ENCODE measurements at regions of chr19 and their contacts with region 1.

Region 1: DNA sequence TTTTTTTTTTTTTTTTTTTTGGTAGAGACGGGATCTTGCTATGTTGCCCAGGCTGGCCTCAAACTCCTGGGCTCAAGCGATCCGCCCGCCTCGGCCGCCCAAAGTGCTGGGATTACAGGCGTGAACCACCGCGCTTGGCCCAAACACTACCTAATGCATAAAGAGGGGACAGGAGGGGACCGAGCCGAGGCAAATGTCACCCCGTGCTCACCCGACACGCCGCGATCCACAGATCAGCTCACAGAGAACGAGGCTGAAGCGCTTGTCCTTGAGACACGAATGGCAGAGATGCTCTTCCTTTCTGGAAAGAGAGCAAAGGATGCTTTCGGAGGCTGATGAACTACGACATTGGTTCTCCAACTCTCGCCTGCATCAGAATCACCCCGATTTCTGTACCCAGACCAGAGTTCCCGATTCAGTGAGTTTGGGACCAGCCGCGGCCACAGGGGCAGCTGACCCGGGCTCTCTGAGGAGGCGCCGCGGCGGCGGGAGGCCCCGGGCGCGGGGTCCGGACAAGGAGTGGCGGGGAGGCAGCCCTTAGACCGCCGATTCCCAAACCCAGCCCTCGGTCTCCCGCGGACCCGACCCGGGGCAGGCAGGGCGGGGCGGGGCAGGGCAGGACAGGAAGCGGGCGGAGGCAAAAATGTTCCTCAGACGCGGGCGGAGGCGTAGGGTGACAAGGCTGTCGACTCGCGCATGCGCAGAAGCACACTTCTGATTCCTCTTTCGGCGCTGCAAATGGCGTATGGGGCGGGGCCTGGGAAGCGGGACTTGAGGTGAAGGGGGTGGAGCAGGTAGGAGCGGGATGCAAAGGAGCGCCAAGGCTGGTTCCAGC is at the start of gene ZNF699:
- DNase-seq: peak; percentile 95 to 99 (median 98)

Region 2: DNA sequence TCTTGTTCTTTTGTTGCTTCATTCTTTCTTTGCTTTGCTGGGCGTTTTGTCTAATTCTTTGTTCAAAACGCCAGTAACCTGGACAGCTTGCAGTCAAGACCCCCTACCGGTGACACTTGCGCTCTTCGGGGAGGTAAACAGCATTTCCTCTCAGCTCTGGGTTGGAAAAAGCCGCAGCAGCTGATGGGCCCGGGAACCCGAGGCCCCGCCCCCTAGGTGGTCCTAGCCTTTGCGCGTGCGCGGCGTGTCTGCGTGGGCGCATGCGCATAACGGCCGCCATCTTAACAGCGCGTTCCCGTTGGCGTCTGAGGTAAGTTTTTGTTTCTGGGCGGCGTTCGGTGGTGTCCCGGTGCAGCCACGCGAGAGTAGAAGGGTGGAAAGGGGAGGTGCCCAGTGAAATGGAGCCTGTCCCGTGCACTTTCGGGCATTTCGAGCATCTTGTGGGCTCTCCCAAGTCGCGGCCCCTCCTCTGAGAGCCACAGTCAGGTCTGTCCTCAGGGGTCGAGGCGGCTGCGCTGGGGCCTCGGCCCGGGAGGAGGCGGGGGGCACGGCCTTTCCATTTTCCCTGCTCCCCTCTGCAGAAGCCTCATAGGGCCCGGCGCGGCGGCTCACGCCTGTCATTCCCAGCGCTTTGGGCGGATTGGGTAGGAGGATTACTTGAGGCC is 14.7 kb after region 1 on chr19 and contains the start of gene ZNF559:
- intact Hi-C with region 1: loop called (anchors 1 kb)
- DNase-seq: peak; percentile 76 to 95 (median 90)

Region 3: DNA sequence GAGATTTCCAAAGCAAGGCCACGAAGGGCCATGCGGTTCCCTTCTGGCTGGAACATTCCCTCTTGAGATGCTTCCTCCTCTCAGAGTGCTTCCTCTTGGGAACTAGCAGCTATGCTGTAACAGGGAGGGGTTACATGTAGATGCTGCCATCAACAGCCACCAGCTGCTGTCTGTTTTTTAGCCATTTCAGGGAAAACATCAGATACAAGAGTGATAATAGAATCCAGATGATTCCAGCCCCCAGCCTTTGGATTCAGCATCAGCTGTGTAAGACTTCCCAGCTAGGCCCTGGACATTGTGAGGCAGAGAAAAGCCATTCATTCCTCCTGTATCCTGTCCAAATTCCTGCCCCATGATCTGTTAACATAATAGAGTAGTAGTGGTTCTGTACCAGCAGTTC is 45.3 kb after region 1 on chr19:
- intact Hi-C with region 1: no loop called
- DNase-seq: no peak

Region 4: DNA sequence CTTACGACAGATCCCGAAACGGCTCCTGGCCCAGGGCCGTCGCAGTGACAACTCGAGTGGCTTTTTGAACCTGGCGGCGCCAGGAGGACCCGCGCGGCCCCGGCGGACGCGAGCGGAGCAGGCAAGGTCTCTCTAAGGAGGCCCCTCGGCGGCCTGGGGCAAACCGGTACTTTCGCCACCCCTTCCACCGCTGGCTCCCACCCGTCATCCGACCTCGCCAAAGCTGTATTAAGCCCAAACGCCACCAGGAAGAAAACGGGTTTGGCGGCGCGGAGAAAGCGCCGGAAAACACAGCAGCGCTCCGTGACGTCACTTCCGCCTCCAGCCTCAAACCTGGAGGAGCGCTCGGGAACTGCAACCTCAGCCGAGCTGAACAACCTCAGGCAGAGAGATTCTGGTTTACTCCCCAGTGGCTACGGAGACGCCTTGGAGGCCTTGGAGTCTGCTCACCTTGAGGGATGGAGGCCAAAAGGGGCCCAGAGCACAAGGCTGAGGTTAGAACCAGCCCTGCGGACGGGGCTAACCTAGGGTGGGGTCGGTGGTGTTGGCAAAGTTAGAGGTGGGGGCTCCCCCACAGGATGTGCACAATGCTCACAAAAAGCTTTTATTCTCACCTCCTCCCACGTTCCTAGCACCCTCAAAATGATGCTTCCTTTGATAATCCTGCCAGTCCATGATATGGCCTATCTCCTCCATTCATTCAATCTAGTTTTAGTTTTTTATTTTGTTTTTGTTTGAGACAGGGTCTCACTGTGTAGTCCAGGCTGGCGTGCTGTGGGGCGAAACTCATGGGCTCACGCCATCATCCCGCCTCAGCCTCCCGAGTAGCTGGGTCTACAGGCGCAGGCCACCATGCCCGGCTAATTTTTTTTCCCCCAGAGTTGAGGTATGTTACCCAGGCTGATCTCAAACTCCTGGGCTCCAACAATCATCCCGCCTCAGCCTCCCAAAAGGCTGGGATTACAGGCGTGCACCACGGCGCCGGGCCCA is 126.2 kb after region 1 on chr19 and contains the start of gene ZNF266:
- intact Hi-C with region 1: loop called (anchors 10 kb)
- DNase-seq: peak; percentile 72 to 94 (median 88)

Measured in head of caudate nucleus (tissue), 42 donors.